Sigmoid colon (tissue), 7 donors: ENCODE measurements at regions of chr11 and their contacts with region 1.

Region 1: DNA sequence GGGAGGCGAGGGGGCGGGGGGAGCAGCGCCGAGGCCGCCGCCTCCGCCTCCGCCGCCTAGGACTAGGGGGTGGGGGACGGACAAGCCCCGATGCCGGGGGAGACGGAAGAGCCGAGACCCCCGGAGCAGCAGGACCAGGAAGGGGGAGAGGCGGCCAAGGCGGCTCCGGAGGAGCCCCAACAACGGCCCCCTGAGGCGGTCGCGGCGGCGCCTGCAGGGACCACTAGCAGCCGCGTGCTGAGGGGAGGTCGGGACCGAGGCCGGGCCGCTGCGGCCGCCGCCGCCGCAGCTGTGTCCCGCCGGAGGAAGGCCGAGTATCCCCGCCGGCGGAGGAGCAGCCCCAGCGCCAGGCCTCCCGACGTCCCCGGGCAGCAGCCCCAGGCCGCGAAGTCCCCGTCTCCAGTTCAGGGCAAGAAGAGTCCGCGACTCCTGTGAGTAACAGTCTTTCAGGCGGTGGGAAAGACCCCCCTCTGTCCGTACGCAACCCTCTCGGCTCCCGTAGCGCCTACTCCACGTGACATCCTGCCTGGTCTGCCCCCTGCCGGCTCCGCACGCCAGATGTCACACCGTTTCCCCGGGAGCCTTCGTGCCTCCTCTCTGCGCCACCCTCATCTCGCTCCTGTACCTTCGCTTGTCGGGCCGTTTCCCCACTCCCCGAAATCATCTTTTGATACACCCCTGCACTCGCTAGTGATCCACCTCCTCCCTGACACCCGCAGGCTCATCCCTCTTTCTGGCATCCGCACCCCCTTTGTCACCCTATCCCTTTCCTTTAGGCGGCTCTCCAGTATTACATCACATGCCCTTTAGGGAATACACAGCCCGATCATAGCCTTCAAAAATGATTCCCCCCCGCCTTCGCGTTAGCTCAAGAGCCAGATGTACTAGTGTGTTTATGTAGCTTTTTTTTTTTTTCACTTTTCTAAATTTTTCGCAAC is 598 bp downstream of the ZFP91 start:
- DNase-seq: peak; percentile 97
- H3K4me3 ChIP-seq: peak overlapping the region; percentile 89 to 100 (median 99)
- H3K27ac ChIP-seq: peak overlapping the region; percentile 98 to 100 (median 100)
- H3K4me1 ChIP-seq: peaks cover 0 to 73% (median 62%) of the 10 kb centered on the region in 4 donors
- H3K27me3 ChIP-seq: no peaks in the 10 kb centered on the region
- CTCF ChIP-seq: peak; percentile 81 to 96 (median 91)
- EP300 ChIP-seq: peak in 2 of 4 donors; percentile 24 to 59
- POLR2A ChIP-seq: peak; percentile 64 to 68

Region 2: DNA sequence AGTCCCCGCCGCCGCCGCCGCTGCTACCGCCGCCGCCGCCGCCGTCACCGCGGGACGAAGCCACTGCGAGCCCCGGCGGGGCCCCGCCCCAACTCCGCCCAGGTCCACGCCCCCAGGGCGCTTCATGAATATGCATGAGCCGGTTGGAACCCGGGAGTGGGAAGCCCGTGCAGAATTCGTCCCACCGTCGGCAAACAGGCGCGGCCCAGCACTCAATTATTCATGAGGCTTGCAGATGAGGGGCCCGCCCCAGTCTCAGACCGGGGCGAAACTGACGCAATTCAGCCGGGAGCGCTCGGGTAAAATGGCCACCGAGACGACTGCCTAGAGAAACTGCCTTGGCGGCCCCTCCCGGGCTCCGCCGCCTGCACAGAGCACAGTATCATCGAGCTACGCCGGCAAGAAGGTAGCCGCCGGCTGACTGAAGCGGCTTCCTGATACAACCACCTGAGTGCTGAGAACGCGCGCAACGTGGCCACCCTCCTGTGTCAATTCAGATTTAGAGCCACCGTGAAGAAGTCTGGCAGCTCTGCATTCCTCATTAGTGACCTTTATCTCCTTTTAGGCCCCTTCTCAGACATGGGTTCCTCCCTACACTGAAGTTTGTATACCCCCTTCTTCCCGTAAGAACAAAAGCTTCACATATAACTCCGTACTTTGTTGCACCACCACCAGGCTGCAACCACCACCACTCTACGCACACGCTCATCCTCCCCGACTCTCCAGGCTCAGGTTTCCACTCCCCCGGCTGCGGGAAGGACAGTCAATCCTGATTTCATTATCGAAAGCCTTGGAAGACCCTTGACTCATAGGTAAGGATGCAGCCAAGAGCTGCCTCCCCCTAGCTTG is 1254.4 kb before region 1 on chr11 and contains the start of gene TNKS1BP1:
- intact Hi-C with region 1: loop called (anchors 5 kb)
- DNase-seq: peak; percentile 99
- H3K4me3 ChIP-seq: peak within 1 kb of the TSS; percentile 71 to 90 (median 86)
- H3K27ac ChIP-seq: peak within 1 kb of the TSS; percentile 89 to 97 (median 94)
- H3K4me1 ChIP-seq: peaks cover 0 to 51% (median 47%) of the 10 kb centered on the region in 4 donors
- H3K27me3 ChIP-seq: no peaks in the 10 kb centered on the region
- CTCF ChIP-seq: peak in 1 of 4 experiments; percentile 9
- EP300 ChIP-seq: no peak
- POLR2A ChIP-seq: peak; percentile 72 to 75
- total RNA-seq, gene TNKS1BP1: 26.4 to 51.2 (median 37.8) TPM

Region 3: DNA sequence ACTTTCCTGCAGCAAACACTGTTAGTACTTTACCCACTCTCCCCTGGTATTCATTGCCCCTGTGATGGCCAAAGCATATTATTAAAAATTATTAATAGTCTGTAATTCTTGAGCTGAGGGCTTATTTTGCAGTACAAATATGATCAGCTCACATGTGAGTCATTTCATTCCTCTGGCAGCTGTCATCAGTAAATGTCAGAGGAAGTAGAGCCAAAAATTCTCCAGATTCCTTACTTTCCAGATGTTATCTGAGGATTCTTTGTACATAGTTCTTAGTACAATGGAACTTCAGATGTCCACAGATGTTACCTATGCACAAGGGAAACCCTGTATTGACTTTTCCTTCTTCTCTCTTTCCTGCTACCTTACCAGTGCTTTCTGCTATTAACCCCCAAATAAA is 185.3 kb before region 1 on chr11:
- intact Hi-C with region 1: no loop called
- DNase-seq: no peak
- H3K4me3 ChIP-seq: no peak overlapping the region
- H3K27ac ChIP-seq: no peak overlapping the region
- H3K4me1 ChIP-seq: no peaks in the 10 kb centered on the region
- H3K27me3 ChIP-seq: no peaks in the 10 kb centered on the region
- CTCF ChIP-seq: no peak
- EP300 ChIP-seq: no peak
- POLR2A ChIP-seq: no peak

Region 4: DNA sequence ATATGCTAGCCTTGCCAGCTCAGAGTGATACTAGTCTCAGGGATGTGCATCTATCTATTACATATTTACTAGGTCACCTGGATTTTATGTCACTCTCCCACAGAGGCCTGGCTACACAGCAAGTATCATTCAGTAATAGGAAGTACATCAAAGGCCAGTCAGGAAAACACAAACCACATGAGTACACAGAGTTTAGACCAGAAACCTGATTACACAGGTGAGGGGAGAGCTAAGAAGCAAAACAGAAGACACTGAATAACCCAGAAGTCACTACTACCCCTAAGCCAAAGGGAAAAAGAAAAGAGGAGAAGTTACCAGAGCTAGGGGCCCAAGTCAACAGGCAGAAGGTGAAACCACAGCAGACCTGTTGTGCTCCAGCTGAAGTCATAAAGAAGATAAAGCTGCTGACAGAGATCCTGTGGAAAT is 17.1 kb before region 1 on chr11:
- intact Hi-C with region 1: no loop called
- DNase-seq: no peak
- H3K4me3 ChIP-seq: no peak overlapping the region
- H3K27ac ChIP-seq: no peak overlapping the region
- H3K4me1 ChIP-seq: no peaks in the 10 kb centered on the region
- H3K27me3 ChIP-seq: no peaks in the 10 kb centered on the region
- CTCF ChIP-seq: no peak
- EP300 ChIP-seq: no peak
- POLR2A ChIP-seq: no peak

Region 5: GRCh38 chr11:58675334-58676155 is 96.1 kb after region 1 on chr11:
- intact Hi-C with region 1: loop called (anchors 5 kb)
- DNase-seq: peak; percentile 82
- H3K4me3 ChIP-seq: no peak overlapping the region
- H3K27ac ChIP-seq: no peak overlapping the region
- H3K4me1 ChIP-seq: no peaks in the 10 kb centered on the region
- H3K27me3 ChIP-seq: peaks cover 0 to 7% (median 0%) of the 10 kb centered on the region in 3 donors
- CTCF ChIP-seq: peak; percentile 59 to 87 (median 70)
- EP300 ChIP-seq: no peak
- POLR2A ChIP-seq: no peak

Region 6: DNA sequence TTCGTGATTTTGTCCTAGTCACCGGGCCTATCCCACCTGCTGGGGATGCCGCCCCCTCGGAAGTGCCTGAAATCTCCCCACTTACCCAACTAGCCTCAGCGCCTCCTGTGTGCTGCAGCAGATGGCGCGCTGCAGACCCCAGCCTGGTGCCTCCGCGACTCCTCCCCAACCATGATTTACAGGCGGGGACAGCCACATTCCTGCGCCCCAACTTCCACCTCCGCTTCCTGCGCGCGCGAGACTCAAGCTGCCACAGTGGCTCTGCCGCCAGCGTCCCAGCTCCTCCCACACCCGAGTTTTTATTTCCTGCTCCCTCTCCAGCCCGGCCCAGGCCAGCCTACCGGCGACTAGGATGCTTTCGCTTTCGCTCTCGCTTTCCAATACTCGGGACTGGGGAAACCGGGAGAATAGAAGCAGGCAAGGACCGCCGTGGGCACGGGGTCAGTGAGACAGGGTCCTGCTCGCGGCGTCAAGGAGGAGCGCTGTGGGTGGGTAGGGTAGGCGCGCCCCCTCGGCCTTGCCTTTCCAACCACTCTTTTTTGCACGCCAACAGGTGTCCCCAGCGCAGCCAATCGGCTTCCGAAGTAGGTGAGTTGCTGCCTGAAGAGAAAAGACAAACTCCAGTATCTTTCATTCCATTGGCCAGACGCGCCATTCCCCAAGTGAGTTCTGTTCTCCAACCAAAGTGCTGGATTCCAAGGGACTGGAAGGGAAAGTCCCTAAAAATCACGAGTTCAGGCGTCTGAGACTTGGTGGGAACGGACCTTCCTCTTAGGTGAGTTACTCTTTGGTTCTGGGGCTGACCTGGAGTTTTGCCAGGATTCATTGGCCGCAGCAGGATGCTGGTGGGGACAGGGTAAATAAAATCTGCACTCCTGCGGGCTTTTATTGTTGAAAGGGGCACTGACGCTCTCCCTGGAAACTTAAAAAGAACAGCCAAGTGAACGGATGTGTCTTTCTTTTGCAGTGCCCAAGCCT is 563.4 kb after region 1 on chr11 and contains the start of gene FAM111A:
- intact Hi-C with region 1: loop called (anchors 5 kb)
- DNase-seq: peak; percentile 94
- H3K4me3 ChIP-seq: peak within 1 kb of the TSS; percentile 66 to 83 (median 75)
- H3K27ac ChIP-seq: peak within 1 kb of the TSS; percentile 86 to 95 (median 89)
- H3K4me1 ChIP-seq: peaks cover 0 to 30% (median 22%) of the 10 kb centered on the region in 4 donors
- H3K27me3 ChIP-seq: no peaks in the 10 kb centered on the region
- CTCF ChIP-seq: no peak
- EP300 ChIP-seq: no peak
- POLR2A ChIP-seq: no peak
- total RNA-seq, gene FAM111A: 26.0 to 33.4 (median 29.0) TPM

Region 7: DNA sequence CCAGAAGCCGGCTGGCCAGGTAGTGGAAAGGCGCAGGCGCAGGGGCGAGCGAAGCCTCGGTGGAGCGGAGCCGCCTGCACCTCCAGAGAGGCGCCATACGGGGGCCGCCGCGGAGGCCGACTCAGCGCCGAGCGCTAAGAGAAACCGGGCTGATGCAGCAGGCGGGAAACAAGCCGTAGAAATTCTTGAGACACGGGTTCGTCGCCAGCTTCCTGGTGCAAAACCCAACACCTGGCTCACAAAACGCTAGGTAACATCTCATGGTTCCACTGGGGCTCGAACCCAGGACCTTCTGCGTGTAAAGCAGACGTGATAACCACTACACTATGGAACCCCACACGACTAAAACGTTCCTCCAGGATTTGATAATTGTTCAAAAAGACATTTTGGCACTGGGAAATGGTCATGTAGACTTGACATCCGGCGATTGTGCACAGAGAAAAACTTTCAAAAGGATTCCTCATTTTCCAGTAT is 970.9 kb after region 1 on chr11:
- intact Hi-C with region 1: loop called (anchors 5 kb)
- DNase-seq: peak; percentile 91
- H3K4me3 ChIP-seq: peak overlapping the region; percentile 46 to 55 (median 52)
- H3K27ac ChIP-seq: peak overlapping the region; percentile 80 to 87 (median 82)
- H3K4me1 ChIP-seq: peaks cover 0 to 13% (median 3%) of the 10 kb centered on the region in 4 donors
- H3K27me3 ChIP-seq: no peaks in the 10 kb centered on the region
- CTCF ChIP-seq: peak; percentile 46 to 76 (median 54)
- EP300 ChIP-seq: no peak
- POLR2A ChIP-seq: no peak